Sigmoid colon (tissue), 7 donors: ENCODE measurements at regions of chr19 and their contacts with region 1.

Region 1: DNA sequence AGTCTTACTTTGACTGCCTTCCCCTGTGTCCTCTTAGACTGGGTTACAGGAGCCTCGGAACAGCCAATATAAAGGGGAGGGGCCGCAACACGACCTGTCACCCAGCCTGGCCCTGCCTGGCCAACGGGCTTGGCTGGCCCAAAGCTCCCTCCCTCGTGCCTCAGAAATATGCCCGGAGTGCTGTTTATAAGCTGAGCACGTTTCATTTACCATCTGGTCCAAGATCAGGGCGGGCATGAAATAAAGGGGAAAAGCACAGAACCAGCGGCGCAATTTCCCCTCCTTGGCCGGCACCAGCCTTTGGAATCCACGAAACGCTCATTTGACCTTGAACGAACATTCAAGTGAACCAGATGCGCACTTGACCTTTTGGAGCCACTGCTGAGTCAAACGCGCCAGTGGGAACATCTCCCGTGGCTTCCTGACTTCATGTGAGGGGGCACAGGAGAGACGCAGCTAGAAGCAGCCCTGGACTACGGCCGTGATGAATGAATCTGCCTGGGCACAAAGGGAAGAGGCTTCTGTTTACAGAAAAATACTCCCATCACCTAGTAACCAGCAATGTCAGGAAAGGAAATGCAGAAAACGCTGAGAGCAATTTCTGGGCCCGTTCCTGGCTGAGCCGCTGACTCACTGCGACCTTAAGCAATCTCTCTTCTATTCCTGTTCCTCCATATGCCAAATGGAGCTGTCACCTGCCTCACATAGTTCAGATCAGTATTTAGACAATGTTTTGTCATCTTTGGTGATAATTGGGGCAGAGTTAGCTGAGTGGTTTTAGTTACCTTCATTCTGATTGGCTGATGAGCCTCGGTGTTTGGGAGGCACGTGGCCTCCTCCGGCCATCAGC is 53.3 kb downstream of the RFX2 start:
- DNase-seq: peak; percentile 94
- H3K4me3 ChIP-seq: peak overlapping the region in 3 of 4 donors; percentile 11 to 32 (median 29)
- H3K27ac ChIP-seq: peak overlapping the region; percentile 91 to 95 (median 92)
- H3K4me1 ChIP-seq: peaks cover 0 to 75% (median 67%) of the 10 kb centered on the region in 4 donors
- H3K27me3 ChIP-seq: no peaks in the 10 kb centered on the region
- CTCF ChIP-seq: no peak
- EP300 ChIP-seq: peak in 2 of 4 donors; percentile 24 to 83
- POLR2A ChIP-seq: peak in 1 of 2 donors; percentile 63

Region 2: DNA sequence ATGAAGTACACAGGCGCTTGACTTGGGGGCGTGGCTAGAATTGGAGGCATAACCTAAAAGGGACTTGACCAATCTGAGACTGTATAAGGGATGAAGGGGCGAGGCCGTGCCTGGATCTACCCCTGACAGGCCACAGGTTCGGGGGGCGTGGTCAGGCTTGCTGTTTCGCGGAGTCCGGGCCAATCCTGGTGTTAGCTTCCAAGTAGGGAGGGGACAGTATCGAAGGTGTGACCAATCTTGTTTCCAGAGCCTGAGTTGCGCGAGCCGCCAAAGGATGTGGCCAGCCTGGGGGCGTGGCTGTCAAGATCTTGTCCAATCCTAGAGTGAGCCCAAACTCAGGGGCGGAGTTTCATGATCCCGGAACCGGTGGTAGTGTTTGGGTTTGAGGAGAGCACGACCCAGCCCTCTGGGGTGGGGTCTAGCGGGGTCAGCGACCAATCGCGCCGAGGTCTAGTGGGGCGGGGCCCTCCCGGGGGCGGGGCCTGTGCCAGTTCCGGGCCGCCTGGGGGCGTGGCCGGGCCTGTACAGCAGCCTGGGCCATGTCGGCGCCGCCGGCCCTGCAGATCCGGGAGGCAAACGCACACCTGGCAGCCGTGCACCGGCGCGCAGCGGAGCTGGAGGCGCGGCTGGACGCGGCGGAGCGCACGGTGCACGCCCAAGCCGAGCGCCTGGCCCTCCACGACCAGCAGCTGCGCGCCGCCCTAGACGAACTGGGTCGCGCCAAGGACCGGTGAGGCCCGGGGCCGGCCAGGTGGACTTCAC is 152.5 kb before region 1 on chr19 and contains the start of gene VMAC:
- intact Hi-C with region 1: no loop called
- DNase-seq: peak; percentile 100
- H3K4me3 ChIP-seq: peak within 1 kb of the TSS; percentile 81 to 91 (median 90)
- H3K27ac ChIP-seq: peak within 1 kb of the TSS; percentile 84 to 94 (median 92)
- H3K4me1 ChIP-seq: peaks cover 0 to 34% (median 30%) of the 10 kb centered on the region in 4 donors
- H3K27me3 ChIP-seq: no peaks in the 10 kb centered on the region
- CTCF ChIP-seq: no peak
- EP300 ChIP-seq: no peak
- POLR2A ChIP-seq: no peak
- total RNA-seq, gene VMAC: 6.1 to 14.4 (median 8.1) TPM

Region 3: GRCh38 chr19:6087074-6087571 is 30.1 kb after region 1 on chr19:
- intact Hi-C with region 1: no loop called
- DNase-seq: no peak
- H3K4me3 ChIP-seq: peak overlapping the region in 2 of 4 donors; percentile 17 to 19
- H3K27ac ChIP-seq: peak overlapping the region; percentile 86 to 93 (median 90)
- H3K4me1 ChIP-seq: peaks cover 0 to 64% (median 50%) of the 10 kb centered on the region in 4 donors
- H3K27me3 ChIP-seq: no peaks in the 10 kb centered on the region
- CTCF ChIP-seq: no peak
- EP300 ChIP-seq: no peak
- POLR2A ChIP-seq: no peak

Region 4: DNA sequence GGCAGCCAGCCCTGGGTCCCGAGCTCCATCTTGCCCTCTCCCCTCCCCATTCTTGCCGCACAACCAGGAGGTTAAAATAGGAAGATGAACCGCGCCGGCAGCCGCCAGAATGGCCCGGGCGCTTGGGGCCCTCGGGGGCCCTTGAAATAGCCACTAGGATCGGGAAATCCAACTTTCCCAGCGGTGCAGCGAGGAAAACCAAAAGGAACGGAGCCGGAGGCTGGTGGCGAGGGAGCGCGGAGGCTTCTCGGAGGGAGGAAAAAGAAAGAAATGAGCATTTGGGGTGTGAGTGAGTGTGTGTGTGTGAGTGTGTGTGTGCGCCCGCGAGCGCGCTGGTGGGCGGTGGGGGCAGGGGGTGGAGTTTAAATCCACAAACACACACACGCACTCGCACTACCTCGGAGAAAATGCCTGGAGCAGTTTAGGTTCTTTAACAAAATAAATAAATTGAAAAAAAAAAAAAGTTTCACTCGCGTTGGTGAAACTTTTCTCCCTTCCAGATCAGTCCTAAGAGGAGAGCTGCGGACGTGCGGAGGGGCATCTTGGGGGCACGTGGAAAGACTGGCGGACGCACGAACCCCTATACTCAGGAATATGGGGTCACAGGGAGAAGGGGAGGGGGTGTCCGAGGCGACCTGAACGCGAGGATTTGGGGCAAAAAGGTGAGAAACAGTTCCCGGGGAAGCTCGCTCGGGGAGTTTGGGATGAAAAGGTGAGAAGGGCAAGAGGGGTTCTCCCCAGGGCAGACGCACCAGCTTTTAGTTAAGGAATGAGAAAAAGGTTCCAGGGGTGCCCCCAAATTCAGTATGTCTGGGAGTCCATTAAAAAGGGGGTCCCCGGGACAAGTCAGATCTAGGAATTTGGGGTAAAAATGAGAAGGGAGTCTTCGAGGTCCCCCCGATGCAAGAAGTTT is 52.0 kb after region 1 on chr19:
- intact Hi-C with region 1: loop called (anchors 1 kb)
- DNase-seq: peak; percentile 90
- H3K4me3 ChIP-seq: peak overlapping the region; percentile 46 to 92 (median 82)
- H3K27ac ChIP-seq: peak overlapping the region; percentile 89 to 94 (median 92)
- H3K4me1 ChIP-seq: peaks cover 0 to 39% (median 35%) of the 10 kb centered on the region in 4 donors
- H3K27me3 ChIP-seq: no peaks in the 10 kb centered on the region
- CTCF ChIP-seq: peak in 1 of 4 experiments; percentile 28
- EP300 ChIP-seq: no peak
- POLR2A ChIP-seq: peak; percentile 41 to 52